ENCODE measurements at regions of chr10 and their contacts with region 1.

Region 1: GRCh38 chr10:88861036-88861435 is 9.4 kb upstream of the ANKRD22 start:
- DNase-seq: no peak
- H3K4me3 ChIP-seq: no peak overlapping the region
- H3K27ac ChIP-seq: no peak overlapping the region
- H3K4me1 ChIP-seq: no peaks in the 10 kb centered on the region
- H3K27me3 ChIP-seq: peaks cover 0 to 7% of the 10 kb centered on the region in 2 donors
- CTCF ChIP-seq: no peak

Region 2: DNA sequence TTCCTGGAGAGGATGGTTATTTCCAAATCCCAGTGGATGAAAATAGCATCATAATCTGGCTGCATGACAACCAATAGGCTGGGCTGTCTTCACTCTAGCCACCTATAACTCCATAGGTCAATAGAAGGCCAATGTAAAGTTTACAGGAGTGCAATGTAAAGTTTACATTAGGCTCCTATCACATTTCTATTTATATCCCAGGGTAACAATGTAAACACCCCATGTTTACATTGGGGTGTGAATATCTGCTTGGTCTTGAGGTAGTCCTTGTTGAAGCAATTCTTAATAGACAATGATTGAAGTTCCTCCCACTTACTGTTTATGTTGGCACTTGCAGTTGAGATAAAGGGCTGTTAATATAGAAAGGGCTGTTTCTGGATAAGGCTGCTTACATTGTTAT is 324.6 kb after region 1 on chr10:
- intact Hi-C with region 1: loop called (anchors 5 kb)
- DNase-seq: no peak
- H3K4me3 ChIP-seq: no peak overlapping the region
- H3K27ac ChIP-seq: no peak overlapping the region
- H3K4me1 ChIP-seq: no peaks in the 10 kb centered on the region
- H3K27me3 ChIP-seq: no peaks in the 10 kb centered on the region
- CTCF ChIP-seq: no peak